ENCODE measurements at regions of chr7 and their contacts with region 1.

Region 1: GRCh38 chr7:50812841-50813475 is 30.3 kb upstream of the GRB10 start:
- DNase-seq: peak; percentile 84
- H3K4me3 ChIP-seq: no peak overlapping the region
- H3K27ac ChIP-seq: no peak overlapping the region
- H3K4me1 ChIP-seq: no peaks in the 10 kb centered on the region
- H3K27me3 ChIP-seq: no peaks in the 10 kb centered on the region
- CTCF ChIP-seq: no peak

Region 2: GRCh38 chr7:51141451-51142003 is 328.6 kb after region 1 on chr7:
- intact Hi-C with region 1: loop called (anchors 10 kb)
- DNase-seq: no peak
- H3K4me3 ChIP-seq: no peak overlapping the region
- H3K27ac ChIP-seq: no peak overlapping the region
- H3K4me1 ChIP-seq: no peaks in the 10 kb centered on the region
- H3K27me3 ChIP-seq: no peaks in the 10 kb centered on the region
- CTCF ChIP-seq: peak; percentile 20

Measured in colonic mucosa (tissue), 4 donors.